WTC11 (cell line): ENCODE measurements at regions of chr6 and their contacts with region 1.

Region 1: DNA sequence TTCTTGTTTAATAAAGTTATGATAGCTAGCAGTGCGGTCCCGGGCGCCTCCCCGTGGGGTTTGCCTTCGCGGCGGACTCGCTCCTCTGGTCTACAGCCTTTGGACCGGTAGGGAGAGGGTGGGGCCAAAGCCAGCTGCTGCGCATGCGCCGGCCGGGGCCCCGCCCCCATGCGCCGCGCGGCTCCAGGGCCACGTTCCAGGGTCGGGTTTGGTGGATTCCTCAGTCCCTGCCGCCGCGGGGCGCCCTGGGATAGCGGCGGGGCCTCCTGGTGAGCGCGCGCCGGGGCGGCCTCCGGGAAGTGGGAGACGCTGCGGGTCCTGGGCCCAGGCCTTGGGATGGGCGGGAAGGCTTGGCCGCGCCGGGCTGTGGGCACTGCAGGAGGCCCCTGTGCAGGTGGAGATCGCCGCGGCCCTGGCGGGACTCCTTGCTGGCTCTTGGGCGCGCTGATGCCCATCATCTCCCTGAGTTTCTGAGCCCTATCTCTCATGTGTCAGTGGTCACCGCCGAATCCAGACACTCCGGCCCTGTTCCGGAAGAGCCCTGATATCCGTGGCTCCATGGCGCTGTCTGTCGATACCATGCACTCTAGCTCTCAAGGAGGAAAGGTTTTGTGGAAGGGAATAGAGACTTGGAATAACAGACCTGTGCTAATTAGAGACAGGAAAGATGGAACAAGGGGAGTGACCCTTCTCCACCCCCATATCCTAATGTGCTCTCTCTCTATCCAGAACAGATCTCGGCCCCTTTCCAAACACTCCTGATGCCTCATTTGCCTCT is at the start of gene VARS2:
- DNase-seq: peak; percentile 83
- ATAC-seq: peak; percentile 85
- H3K4me3 Mint-ChIP-seq: peak within 1 kb of the TSS; percentile 90
- H3K27ac Mint-ChIP-seq: peak within 1 kb of the TSS; percentile 90
- H3K4me1 Mint-ChIP-seq: peaks cover 22% of the 10 kb centered on the region
- H3K27me3 Mint-ChIP-seq: no peaks in the 10 kb centered on the region
- CTCF ChIP-seq: no peak
- total RNA-seq, gene VARS2: 65.6 to 74.1 TPM (median 69.9 TPM) in 3 replicates

Region 2: GRCh38 chr6:30821862-30822782 is 92.1 kb before region 1 on chr6:
- CTCF ChIA-PET with region 1: interaction called, 38 read pairs
- POLR2A ChIA-PET with region 1: no interaction called
- DNase-seq: no peak
- ATAC-seq: peak; percentile 59
- H3K4me3 Mint-ChIP-seq: no peak overlapping the region
- H3K27ac Mint-ChIP-seq: peak overlapping the region; percentile 54; the same call in 1 of the 2 replicates
- H3K4me1 Mint-ChIP-seq: peaks cover 30% of the 10 kb centered on the region
- H3K27me3 Mint-ChIP-seq: no peaks in the 10 kb centered on the region
- CTCF ChIP-seq: peak; percentile 18; the same call in 1 of the 2 replicates

Region 3: GRCh38 chr6:30844091-30844535 is 70.2 kb before region 1 on chr6:
- CTCF ChIA-PET with region 1: interaction called, 10 read pairs
- POLR2A ChIA-PET with region 1: no interaction called
- DNase-seq: peak; percentile 38
- ATAC-seq: peak; percentile 66
- H3K4me3 Mint-ChIP-seq: no peak overlapping the region
- H3K27ac Mint-ChIP-seq: peak overlapping the region; percentile 91
- H3K4me1 Mint-ChIP-seq: peaks cover 84% of the 10 kb centered on the region
- H3K27me3 Mint-ChIP-seq: no peaks in the 10 kb centered on the region
- CTCF ChIP-seq: no peak

Region 4: GRCh38 chr6:30942338-30943060 is 28.2 kb after region 1 on chr6:
- CTCF ChIA-PET with region 1: interaction called, 44 read pairs
- POLR2A ChIA-PET with region 1: interaction called, 3 read pairs
- DNase-seq: peak; percentile 98
- ATAC-seq: peak; percentile 93
- H3K4me3 Mint-ChIP-seq: peak overlapping the region; percentile 17; the same call in 1 of the 2 replicates
- H3K27ac Mint-ChIP-seq: peak overlapping the region; percentile 83
- H3K4me1 Mint-ChIP-seq: peaks cover 44% of the 10 kb centered on the region
- H3K27me3 Mint-ChIP-seq: no peaks in the 10 kb centered on the region; the same call in 1 of the 2 replicates
- CTCF ChIP-seq: peak; percentile 36; the same call in 1 of the 2 replicates

Region 5: GRCh38 chr6:31007694-31008093 is 93.4 kb after region 1 on chr6:
- CTCF ChIA-PET with region 1: interaction called, 10 read pairs
- POLR2A ChIA-PET with region 1: no interaction called
- DNase-seq: no peak
- ATAC-seq: no peak
- H3K4me3 Mint-ChIP-seq: no peak overlapping the region
- H3K27ac Mint-ChIP-seq: no peak overlapping the region
- H3K4me1 Mint-ChIP-seq: no peaks in the 10 kb centered on the region
- H3K27me3 Mint-ChIP-seq: no peaks in the 10 kb centered on the region
- CTCF ChIP-seq: no peak

Region 6: DNA sequence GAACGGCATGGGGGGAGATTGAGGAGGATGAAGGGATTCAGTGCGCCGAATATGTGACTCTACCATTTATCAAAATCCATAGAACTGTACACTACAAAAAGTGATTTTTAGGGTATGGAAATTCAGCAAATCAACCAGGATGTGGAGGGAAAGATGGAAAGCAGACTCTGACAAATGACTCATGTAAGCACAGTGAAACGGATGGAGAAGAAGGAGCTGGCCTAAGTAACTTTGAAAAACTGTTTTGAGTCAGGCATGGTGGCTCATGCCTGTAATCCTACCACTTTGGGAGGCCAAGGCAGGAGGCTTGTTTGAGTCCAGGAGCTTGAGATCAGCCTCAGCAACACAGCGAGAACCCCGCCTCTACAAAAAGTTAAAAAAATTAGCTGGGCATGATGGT is 135.3 kb after region 1 on chr6:
- CTCF ChIA-PET with region 1: interaction called, 19 read pairs
- POLR2A ChIA-PET with region 1: no interaction called
- DNase-seq: no peak
- ATAC-seq: no peak
- H3K4me3 Mint-ChIP-seq: no peak overlapping the region
- H3K27ac Mint-ChIP-seq: no peak overlapping the region
- H3K4me1 Mint-ChIP-seq: no peaks in the 10 kb centered on the region
- H3K27me3 Mint-ChIP-seq: peaks cover 3% of the 10 kb centered on the region; the same call in 1 of the 2 replicates
- CTCF ChIP-seq: no peak

Region 7: DNA sequence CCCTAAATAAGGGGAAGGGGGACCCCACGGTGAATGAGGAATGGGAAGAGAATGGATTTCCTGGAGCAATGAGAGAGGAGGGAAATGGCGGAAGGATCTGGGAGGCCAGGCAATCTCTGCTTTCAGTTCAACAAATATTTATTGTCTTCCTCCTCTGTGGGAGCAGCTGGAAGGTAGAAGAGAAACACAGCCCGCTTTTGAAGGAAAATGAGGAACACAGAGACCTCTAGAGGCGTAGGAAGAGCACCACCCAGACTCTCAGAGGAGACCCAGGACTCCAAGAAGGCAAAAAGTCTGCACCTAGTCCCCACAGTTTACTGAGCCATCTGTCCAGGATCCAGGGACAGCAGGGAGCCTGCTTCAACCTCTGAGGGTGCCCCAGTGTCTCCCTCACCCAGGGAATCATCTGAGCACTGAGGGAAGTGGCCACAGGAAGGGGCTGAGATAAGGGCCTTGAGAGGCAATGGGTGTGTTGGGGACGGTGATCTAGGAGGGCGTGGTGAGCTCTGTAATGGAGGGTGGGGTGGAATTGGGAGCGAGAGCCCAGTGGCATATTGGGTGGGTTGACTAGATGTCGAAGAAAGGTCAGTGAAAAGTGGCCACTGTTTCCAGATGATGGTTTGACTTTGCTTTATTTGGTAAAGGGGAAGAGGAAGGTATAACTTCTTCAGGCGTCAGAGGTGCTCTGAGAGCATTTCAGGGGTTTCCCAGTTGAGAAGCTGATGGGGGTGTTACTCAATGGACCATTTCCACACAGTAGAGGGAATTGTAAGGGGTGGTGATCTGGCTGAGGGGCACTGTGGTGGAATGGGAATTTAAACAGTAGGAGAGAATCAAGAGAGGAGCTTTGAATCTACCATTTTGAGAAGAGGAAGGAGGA is 200.9 kb after region 1 on chr6:
- CTCF ChIA-PET with region 1: interaction called, 12 read pairs
- POLR2A ChIA-PET with region 1: no interaction called
- DNase-seq: no peak
- ATAC-seq: peak; percentile 70
- H3K4me3 Mint-ChIP-seq: no peak overlapping the region
- H3K27ac Mint-ChIP-seq: no peak overlapping the region
- H3K4me1 Mint-ChIP-seq: peaks cover 30% of the 10 kb centered on the region
- H3K27me3 Mint-ChIP-seq: peaks cover 22% of the 10 kb centered on the region
- CTCF ChIP-seq: no peak